ENCODE measurements at regions of chr13 and their contacts with region 1.

Region 1: GRCh38 chr13:24763596-24764275 is at the start of gene RNF17:
- DNase-seq: no peak
- ATAC-seq: no peak
- H3K4me3 ChIP-seq: no peak within 1 kb of the TSS
- H3K27ac ChIP-seq: no peak within 1 kb of the TSS
- H3K4me1 ChIP-seq: no peaks in the 10 kb centered on the region
- H3K27me3 ChIP-seq: no peaks in the 10 kb centered on the region
- CTCF ChIP-seq: no peak
- total RNA-seq, gene RNF17: not detected

Region 2: DNA sequence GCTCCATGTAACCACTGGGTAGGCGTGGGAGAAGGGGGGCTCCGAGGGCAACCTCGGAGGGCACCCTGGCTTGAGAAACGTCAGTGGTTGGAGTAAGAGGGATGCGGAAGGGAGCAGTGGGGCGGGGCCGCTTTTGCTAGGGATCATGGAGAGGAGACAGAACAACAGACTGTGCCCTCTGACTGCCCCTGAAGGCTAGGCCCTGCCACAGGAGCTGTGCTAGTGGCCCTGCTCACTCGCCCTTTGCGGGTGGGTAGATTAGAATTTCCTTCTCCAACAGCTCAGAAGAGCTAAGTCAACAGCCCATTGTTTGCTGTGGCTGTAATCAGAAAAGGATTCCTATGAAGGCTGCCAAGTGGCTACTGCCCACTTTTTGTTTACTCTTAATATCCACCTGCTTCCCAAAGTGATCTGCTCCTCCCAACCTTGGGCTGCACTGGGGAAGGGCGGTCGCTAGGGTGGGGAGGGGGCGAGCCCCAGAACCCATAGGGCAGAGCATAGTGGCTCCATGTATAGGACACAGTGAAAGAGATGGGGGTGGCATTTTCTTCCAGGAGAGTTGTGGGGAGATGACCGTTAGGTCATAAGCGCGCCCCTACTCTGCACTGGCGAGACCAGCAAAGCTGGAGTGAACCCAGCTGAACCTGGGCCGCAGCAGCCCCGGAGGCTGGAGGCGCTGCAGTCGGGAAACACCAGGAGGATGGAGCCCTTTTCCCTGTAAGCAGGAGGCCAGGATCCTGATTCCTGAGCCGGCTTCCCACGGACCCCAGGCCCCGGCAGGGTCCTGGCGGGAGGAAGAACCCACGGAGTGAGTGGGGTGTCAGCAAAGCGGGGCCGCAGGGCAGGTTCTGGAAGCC is 456.3 kb before region 1 on chr13:
- CTCF ChIA-PET with region 1: no interaction called
- POLR2A ChIA-PET with region 1: interaction called, 17 read pairs
- in situ Hi-C with region 1: no loop called
- intact Hi-C with region 1: no loop called
- DNase-seq: no peak
- ATAC-seq: no peak
- H3K4me3 ChIP-seq: no peak overlapping the region
- H3K27ac ChIP-seq: no peak overlapping the region
- H3K4me1 ChIP-seq: no peaks in the 10 kb centered on the region
- H3K27me3 ChIP-seq: no peaks in the 10 kb centered on the region
- CTCF ChIP-seq: no peak

Region 3: GRCh38 chr13:24995226-24995804 is 231.6 kb after region 1 on chr13:
- CTCF ChIA-PET with region 1: no interaction called
- POLR2A ChIA-PET with region 1: no interaction called
- in situ Hi-C with region 1: no loop called
- intact Hi-C with region 1: no loop called
- DNase-seq: no peak
- ATAC-seq: peak; percentile 93
- H3K4me3 ChIP-seq: no peak overlapping the region
- H3K27ac ChIP-seq: no peak overlapping the region
- H3K4me1 ChIP-seq: no peaks in the 10 kb centered on the region
- H3K27me3 ChIP-seq: no peaks in the 10 kb centered on the region; the same call in 1 of the 2 replicates
- CTCF ChIP-seq: peak; percentile 75